ENCODE measurements at regions of chr4 and their contacts with region 1.

Region 1: GRCh38 chr4:39977489-39978377 is at the start of gene PDS5A:
- H3K4me3 Mint-ChIP-seq: peak within 1 kb of the TSS; percentile 85
- H3K27ac Mint-ChIP-seq: peak within 1 kb of the TSS; percentile 87
- H3K4me1 Mint-ChIP-seq: peaks cover 29% of the 10 kb centered on the region
- H3K27me3 Mint-ChIP-seq: no peaks in the 10 kb centered on the region

Region 2: DNA sequence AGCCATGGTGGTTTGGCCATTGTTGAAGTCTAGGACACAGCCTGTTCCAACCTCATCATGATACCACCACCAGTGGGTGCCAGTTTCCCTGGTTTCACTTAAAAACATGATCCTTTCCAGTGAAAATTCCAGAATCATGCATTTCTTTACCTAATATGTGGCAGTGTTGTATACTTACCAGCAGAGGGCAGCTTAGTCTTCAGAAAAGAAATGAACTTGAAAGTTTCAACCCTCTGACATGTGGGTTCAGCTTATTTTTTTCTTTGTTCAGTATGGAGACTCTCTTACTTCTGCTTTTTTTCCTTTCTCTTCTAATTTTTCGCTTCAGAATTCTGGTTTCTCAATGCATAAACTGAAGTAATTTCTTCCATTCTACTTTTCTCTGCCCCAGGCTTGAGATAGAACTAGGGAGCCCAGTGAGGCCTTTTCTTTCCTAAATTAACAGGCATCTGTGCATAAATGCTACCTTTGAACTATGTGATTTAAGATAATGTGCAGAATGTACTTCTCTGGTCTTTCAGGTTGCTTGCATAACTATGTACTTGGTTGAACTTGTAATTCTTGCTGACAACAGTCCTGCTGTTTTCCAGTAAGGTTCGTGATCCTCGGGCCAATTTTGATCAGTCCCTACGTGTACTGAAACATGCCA is 508.2 kb before region 1 on chr4:
- intact Hi-C with region 1: loop called (anchors 1 kb)
- H3K4me3 Mint-ChIP-seq: peak overlapping the region; percentile 60
- H3K27ac Mint-ChIP-seq: peak overlapping the region; percentile 87
- H3K4me1 Mint-ChIP-seq: peaks cover 6% of the 10 kb centered on the region
- H3K27me3 Mint-ChIP-seq: no peaks in the 10 kb centered on the region

Region 3: DNA sequence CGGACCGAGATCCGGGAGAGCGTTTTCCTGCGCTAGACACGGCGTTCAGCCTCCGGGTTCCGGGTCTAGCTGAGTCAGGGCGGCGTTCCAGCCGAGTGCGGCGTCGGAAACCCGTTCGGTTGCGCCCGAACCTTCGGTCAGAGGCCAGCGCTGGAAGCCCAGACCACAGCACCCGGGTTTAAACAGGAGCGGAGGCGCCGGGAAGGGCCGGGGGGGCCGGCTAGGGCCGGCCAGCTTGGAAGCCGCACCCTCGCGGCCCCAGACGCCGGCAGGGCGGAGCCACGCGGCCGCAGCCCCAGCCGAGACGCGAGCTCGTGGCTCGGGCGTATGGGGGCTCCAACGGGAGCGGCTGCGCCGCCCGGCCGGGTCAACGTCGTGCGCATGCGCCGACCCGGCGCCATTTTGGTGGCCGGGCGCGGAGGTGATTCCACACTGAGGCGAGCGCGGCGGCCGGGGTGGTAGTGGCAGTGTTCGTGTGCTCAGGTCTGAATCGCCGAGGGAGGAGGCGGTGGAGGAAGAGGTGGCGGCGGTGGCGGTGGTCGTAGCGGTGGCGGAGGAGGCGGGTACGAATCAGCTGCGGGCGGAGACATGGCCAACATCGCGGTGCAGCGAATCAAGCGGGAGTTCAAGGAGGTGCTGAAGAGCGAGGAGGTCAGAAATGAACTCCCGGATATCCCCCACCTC is 279.9 kb before region 1 on chr4 and contains the start of gene UBE2K:
- intact Hi-C with region 1: loop called (anchors 2 kb)
- H3K4me3 Mint-ChIP-seq: peak within 1 kb of the TSS; percentile 93
- H3K27ac Mint-ChIP-seq: peak within 1 kb of the TSS; percentile 91
- H3K4me1 Mint-ChIP-seq: peaks cover 16% of the 10 kb centered on the region
- H3K27me3 Mint-ChIP-seq: no peaks in the 10 kb centered on the region

Region 4: GRCh38 chr4:39913471-39913870 is 64.3 kb before region 1 on chr4:
- intact Hi-C with region 1: loop called (anchors 5 kb)
- H3K4me3 Mint-ChIP-seq: no peak overlapping the region
- H3K27ac Mint-ChIP-seq: no peak overlapping the region
- H3K4me1 Mint-ChIP-seq: no peaks in the 10 kb centered on the region
- H3K27me3 Mint-ChIP-seq: no peaks in the 10 kb centered on the region

Region 5: DNA sequence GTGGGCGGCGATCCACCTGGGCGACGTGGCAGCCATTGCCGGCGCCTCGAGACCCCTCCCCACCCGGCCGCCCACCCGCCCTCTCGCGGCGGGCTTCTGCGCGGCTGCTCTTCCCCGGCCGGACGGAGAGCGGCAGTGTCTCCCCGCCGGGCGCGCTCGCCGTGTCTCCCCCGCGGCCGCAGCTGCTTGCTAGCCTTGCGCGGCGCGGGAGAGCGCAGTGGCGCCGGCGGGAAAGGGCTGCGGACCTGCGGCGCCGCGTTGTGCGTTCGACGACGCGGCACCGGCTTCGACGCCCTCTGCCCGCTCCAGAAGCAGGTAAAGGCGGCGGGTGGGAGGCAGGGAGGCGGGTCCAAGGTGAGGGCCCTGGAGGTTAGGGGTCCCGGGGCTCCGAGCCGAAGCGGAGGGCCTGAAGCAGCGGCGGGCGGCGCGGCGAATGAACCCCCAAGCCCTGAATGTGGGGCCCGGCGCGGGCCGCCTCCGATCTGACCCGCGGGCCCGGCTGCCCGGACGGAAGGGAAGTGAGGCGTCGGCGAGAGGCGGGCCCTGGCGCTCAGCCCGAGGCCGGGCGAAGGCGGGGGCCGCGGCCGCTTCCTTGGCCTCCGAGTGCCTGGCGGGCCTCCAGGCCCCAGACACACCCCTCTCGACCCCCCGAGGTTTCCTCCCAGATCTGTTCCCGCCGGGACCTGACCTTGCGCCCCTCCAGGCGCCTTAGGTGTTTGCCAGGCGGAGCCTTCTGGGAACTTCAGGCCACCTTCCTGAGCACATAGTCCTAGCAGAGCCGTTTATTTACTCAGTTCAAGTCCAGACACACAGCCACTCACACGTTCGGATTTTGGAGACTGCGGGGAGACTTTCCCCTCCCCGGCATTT is 79.2 kb after region 1 on chr4 and contains the start of gene N4BP2:
- intact Hi-C with region 1: loop called (anchors 1 kb)
- H3K4me3 Mint-ChIP-seq: peak within 1 kb of the TSS; percentile 93
- H3K27ac Mint-ChIP-seq: peak within 1 kb of the TSS; percentile 97
- H3K4me1 Mint-ChIP-seq: peaks cover 22% of the 10 kb centered on the region
- H3K27me3 Mint-ChIP-seq: peaks cover 4% of the 10 kb centered on the region

Measured in dendritic cell treated with granulocyte-macrophage colony-stimulating factor and Interleukin-4, amounts not matched to agents 40 ng/mL and 50 ng/mL, for 4 days (primary cell).